ENCODE measurements at regions of chr14 and their contacts with region 1.

Region 1: GRCh38 chr14:57268161-57269069 is at the starts of genes AP5M1 and EXOC5:
- DNase-seq: peak; percentile 98
- H3K4me3 Mint-ChIP-seq: peak within 1 kb of the TSS; percentile 96
- H3K27ac Mint-ChIP-seq: peak within 1 kb of the TSS; percentile 100
- H3K4me1 Mint-ChIP-seq: peaks cover 46% of the 10 kb centered on the region
- H3K27me3 Mint-ChIP-seq: no peaks in the 10 kb centered on the region
- total RNA-seq, gene AP5M1: 41.6 and 47.5 TPM in 2 replicates
- total RNA-seq, gene EXOC5: 76.8 and 80.5 TPM in 2 replicates

Region 2: DNA sequence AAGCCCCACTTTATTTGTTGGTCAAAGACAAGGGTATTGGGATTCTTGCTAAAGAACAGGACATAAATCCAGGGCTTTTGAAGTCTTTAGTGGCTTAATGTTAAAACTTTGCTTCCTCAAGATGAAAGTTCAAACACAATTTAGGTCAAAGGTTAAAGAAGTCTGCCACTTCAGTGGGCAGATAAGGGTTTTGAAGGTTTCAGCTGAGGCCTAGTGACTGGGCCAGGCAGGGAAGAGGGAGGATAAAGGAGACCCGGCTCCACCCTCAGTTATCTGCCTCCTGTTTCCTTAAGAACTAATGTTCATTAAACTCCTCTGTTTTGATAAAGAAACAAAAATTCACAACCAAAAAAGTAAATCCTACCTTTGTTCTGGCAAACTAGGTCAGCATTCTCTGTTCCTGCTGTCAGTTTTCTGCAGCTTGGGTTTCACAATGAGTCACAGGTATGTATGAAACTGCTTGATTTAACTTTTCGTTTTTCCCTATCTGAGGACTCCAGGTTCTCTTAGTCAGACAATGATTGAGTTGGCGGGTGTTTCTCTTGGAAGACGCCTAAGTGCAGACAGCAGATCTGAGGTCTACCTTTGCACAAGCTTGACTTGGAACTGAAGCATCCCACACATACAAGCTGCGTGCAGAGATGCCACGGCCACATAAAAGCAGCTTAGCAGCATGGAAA is 208.0 kb before region 1 on chr14:
- intact Hi-C with region 1: loop called (anchors 2 kb)
- DNase-seq: peak; percentile 76
- H3K4me3 Mint-ChIP-seq: peak overlapping the region; percentile 16
- H3K27ac Mint-ChIP-seq: peak overlapping the region; percentile 83
- H3K4me1 Mint-ChIP-seq: peaks cover 17% of the 10 kb centered on the region
- H3K27me3 Mint-ChIP-seq: peaks cover 13% of the 10 kb centered on the region

Region 3: DNA sequence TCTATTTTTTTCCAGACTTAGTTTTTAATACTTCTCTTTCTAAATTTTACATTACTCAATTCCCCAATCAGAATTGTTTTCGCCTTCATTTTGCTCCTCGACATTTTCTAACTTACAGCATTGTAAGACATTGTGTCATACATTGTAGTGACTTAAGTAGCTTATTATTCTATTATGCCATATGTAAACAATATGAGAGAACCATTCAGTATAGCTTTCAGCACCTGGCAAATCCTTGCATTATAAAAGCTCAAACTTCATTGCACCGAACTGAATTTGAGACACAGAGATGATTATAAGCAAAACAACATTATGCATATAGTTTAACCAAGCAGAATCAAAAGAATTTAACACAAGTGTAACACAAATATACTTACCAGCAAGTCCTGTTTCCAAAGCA is 46.5 kb before region 1 on chr14:
- intact Hi-C with region 1: no loop called
- DNase-seq: no peak
- H3K4me3 Mint-ChIP-seq: no peak overlapping the region
- H3K27ac Mint-ChIP-seq: no peak overlapping the region
- H3K4me1 Mint-ChIP-seq: no peaks in the 10 kb centered on the region
- H3K27me3 Mint-ChIP-seq: no peaks in the 10 kb centered on the region

Region 4: DNA sequence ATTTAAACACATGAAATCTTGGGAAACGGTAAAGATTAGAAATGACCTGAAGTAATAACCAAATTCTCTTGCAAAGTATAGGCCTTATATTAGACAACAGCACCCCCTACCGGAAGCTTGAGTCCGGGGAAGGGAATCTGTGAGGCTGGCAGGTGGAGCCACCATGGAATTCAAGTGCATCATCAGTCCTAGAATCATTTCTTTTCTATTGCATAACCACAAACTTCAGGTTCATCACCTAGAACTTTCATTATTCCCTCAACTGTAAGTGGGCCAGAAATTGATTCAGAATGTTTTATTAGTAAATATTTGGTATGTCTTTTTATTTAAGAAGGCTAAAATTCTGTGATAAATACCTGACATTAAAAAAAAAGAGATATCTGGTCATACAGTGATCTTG is 48.9 kb after region 1 on chr14:
- intact Hi-C with region 1: no loop called
- DNase-seq: peak; percentile 92
- H3K4me3 Mint-ChIP-seq: no peak overlapping the region
- H3K27ac Mint-ChIP-seq: no peak overlapping the region
- H3K4me1 Mint-ChIP-seq: peaks cover 5% of the 10 kb centered on the region
- H3K27me3 Mint-ChIP-seq: peaks cover 2% of the 10 kb centered on the region

Region 5: GRCh38 chr14:57420986-57421385 is 152.6 kb after region 1 on chr14:
- intact Hi-C with region 1: no loop called
- DNase-seq: no peak
- H3K4me3 Mint-ChIP-seq: no peak overlapping the region
- H3K27ac Mint-ChIP-seq: no peak overlapping the region
- H3K4me1 Mint-ChIP-seq: no peaks in the 10 kb centered on the region
- H3K27me3 Mint-ChIP-seq: peaks cover 1% of the 10 kb centered on the region

Region 6: GRCh38 chr14:57526942-57527341 is 258.5 kb after region 1 on chr14:
- intact Hi-C with region 1: no loop called
- DNase-seq: no peak
- H3K4me3 Mint-ChIP-seq: no peak overlapping the region
- H3K27ac Mint-ChIP-seq: no peak overlapping the region
- H3K4me1 Mint-ChIP-seq: no peaks in the 10 kb centered on the region
- H3K27me3 Mint-ChIP-seq: no peaks in the 10 kb centered on the region